ENCODE measurements at regions of chr3 and their contacts with region 1.

Region 1: GRCh38 chr3:8441969-8442559 is 59.6 kb upstream of the LMCD1 start:
- DNase-seq: no peak
- H3K4me3 ChIP-seq: no peak overlapping the region
- H3K27me3 ChIP-seq: peaks cover 1% of the 10 kb centered on the region; the same call in 1 of the 2 replicates
- CTCF ChIP-seq: peak; percentile 75

Region 2: DNA sequence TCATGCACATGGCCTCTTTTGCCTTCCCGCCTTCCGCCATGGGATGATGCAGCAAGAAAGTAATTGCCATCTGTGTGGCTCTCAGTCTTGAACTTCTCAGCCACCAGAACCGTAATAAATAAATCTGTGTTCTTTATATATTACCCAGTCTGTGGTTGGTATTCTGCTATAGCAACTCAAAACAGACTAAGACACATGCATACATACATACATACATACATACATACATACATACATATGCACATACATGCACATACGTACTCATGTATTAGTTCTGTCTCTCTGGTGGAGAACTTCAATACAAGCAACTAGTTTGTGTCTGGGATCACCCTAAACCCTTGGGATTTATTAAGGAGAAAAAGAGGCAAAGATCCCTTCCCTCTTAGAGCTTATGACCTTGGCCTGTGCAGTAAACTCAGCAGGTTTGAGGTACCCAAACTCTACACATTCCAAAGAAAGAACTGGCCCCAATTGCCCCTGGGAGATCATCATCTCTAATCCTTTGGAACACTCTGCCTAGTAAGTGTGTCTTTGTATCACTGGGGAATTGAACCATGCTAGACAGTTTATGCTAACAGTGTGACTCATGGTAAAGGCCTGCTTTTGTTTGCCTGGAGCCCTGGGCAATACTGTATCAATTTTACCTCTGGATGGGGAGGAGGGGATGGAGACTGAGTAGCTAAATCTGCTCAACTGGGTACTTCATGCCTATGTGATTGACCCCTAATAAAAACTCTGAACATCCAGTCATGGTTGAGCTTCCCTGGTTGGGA is 56.0 kb before region 1 on chr3:
- CTCF ChIA-PET with region 1: no interaction called
- POLR2A ChIA-PET with region 1: no interaction called
- DNase-seq: no peak
- H3K4me3 ChIP-seq: no peak overlapping the region
- H3K27me3 ChIP-seq: no peaks in the 10 kb centered on the region; the same call in 1 of the 2 replicates
- CTCF ChIP-seq: no peak

Region 3: DNA sequence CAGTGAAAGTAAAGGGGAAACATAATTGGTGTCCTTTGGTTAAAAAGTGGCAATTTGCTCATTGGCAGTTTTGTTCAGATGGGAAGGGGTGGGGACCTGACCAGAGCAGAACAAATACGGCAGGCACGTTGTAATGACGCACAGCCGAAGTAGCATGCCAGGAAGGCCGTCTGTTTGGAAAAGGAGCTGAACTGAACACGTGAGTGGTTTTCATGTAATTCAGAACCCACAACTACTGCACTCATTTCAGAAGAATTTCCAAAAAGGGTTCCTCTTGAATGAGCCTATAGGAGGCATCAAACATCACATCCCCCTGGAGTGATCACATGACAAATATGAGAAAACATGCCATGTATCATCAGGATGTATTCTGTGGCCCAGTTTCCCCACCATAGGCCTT is 16.6 kb after region 1 on chr3:
- CTCF ChIA-PET with region 1: interaction called, 14 read pairs
- POLR2A ChIA-PET with region 1: interaction called, 6 read pairs
- DNase-seq: peak; percentile 93
- H3K4me3 ChIP-seq: no peak overlapping the region
- H3K27me3 ChIP-seq: no peaks in the 10 kb centered on the region
- CTCF ChIP-seq: 0 out of 2 replicates have a peak, but pooled peaks have one; percentile 11

Region 4: DNA sequence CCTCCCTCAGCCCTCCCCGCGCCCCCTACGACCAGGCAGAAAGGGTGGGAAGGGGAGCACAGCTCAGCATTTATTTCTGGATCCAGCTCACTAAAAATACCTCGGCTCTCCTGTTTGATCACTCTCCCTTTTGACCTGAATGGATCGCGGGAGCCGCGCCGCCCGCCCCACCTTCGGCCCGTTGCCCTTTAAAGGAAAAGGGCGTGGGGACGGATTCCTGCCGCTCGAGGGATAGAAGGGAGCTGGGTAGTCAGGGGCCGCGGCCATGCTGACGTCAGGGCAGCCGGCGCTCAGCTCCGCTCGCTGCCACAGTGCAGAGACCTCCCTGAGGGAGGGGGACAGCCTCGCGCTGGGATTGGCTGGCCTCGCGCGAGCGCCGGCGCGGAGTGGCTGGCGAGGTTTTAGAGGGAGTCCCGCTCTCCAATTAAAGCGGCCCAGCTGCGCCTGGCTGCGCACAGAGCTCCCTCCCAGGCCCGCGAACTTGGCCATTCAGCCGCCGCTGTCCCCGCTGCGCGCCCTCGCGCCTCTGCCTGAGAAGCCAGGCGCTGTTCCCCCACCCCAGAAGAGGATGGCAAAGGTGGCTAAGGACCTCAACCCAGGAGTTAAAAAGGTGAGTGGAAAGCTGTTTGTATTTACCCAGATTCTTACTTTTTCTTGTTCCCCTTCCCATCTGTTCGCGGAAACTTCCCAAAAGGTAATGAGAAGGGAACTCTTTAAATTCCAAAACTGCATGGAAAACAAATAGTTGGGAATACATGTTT is 59.5 kb after region 1 on chr3 and contains the start of gene LMCD1:
- CTCF ChIA-PET with region 1: interaction called, 44 read pairs
- POLR2A ChIA-PET with region 1: interaction called, 5 read pairs
- DNase-seq: peak; percentile 87
- H3K4me3 ChIP-seq: peak within 1 kb of the TSS; percentile 52
- H3K27me3 ChIP-seq: no peaks in the 10 kb centered on the region
- CTCF ChIP-seq: peak; percentile 51
- polyA plus RNA-seq, gene LMCD1: 157 and 168 TPM in 2 replicates

Region 5: DNA sequence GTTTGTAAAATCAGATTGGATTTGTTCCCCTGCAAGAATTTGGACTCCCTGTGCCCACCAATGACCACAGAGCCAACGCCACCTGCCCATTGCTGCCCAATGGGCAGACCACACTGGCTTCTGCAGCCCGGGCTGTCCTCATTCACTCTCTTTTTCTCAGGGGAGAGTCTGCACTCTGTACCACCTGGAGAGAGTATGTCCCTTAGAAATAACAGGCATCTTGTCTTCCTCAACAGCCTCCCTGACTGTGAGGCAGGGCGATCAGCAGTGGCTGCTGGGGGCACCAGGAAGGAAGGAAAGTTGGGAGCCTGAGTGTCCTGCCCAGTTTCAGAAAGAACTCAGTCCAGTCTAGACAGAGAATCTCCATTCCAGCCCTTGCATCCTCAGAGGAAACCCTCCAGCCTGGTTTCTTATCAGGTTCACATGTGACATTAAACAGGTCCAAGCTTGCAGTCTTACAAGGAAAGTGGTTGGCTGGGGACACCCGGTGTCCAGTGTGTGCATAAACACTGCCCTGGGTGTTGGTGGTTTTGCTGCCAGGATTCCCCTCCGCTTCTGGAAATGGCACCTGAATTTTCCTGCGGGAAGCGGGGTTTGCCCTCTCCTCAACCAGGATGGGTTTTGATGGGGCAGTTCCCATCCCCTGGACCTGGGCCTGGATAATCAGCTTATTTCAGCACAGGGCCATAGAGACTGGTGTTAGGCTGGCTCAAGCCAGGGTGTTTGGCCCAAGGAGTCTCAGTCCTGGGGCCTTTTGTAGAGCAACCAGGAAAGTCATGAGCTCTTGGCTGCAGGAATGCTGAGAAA is 165.4 kb after region 1 on chr3:
- CTCF ChIA-PET with region 1: interaction called, 15 read pairs
- POLR2A ChIA-PET with region 1: no interaction called
- DNase-seq: no peak
- H3K4me3 ChIP-seq: no peak overlapping the region
- H3K27me3 ChIP-seq: no peaks in the 10 kb centered on the region
- CTCF ChIP-seq: peak; percentile 75

Region 6: DNA sequence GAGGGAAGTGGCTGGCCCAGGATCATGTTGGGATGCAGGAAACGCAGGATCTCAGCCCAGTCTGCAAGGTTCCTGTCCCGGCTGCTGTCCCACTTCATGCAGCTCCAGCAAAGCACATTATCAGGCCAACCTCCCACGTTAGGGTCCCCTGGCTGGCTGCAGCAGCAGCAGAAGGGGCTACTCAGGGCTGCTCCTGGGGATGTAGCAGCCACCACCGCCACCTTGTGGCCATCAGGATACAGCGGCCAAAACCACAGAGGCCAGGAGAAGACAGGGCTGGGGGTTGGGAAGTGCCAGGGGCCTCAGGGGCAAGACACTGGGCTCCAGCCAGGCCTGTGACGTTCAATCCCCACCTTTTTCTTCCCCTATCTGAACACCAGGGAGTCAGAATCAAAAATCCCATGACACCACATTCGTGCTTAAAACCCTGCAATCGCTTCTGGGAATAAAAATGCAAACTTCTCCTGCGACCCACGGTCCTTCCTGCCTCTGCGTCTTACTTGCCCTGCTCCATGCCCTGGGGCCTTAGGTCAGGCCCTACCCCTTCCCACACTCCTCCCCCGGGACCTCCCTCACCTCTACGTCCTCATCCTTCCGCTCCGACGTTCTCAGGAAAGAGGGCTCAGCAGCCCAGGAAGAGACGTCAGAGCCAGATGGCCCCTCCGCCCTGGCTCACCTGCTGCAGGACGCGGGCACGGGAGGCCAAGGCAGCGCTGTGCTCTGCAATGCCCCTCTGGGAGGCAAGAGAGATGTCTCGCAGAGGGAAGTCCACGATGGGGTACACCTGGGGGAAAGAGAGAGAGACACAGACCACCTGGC is 181.0 kb after region 1 on chr3:
- CTCF ChIA-PET with region 1: interaction called, 42 read pairs
- POLR2A ChIA-PET with region 1: no interaction called
- DNase-seq: no peak
- H3K4me3 ChIP-seq: no peak overlapping the region
- H3K27me3 ChIP-seq: no peaks in the 10 kb centered on the region
- CTCF ChIP-seq: peak; percentile 95